ENCODE measurements at regions of chr15 and their contacts with region 1.

Region 1: DNA sequence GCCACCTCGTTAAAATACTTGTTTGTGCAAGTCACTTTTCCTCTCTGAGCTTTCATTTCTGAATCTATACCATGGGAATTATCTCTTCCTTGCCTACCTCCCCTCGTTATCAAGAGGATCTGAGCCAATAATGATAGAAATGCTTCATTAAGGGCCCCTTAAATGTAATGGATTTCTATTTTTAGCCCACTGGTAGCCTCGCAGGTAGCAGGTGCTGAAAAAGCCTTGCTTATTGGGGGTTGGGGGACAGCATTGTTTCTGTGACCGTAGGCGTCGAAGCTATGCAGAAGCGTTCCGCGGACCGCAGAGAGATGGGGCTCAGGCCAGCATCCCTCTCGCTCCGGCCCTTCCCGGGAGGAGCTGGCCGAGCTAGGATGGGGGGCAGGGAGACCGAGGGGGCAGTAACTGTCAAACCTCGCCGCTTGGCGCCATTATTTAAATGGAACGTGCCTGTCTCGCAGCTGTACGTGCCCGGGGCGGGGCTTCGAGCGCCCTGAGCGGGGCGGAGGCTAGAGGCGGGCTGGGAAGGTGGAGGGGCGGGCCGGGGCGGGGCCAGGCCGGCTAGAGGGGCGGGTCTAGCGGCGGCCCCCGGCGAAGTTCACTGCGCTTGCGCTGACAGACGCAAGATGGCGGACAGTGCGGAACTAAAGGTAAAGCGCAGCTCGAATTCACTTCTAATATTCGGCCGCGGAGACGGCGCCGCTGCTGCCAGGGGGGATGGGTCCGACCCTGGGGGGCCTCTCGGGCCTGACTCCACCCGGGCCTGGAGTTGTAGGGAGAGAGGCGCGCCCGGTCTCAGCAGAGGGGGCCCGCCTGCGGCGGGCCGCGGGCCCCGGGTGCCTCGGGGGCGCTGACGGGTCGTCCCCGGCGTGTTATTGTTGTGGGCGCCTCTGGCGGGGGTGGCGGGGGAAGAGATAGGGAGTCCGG is at the start of gene PIAS1:
- DNase-seq: peak; percentile 88
- H3K4me3 ChIP-seq: peak within 1 kb of the TSS; percentile 79 to 99 (median 87)
- H3K27ac ChIP-seq: peak within 1 kb of the TSS; percentile 73
- H3K4me1 ChIP-seq: peaks cover 6% of the 10 kb centered on the region
- H3K27me3 ChIP-seq: no peaks in the 10 kb centered on the region
- CTCF ChIP-seq: no peak
- total RNA-seq, gene PIAS1: 30.2 to 31.0 TPM

Region 2: DNA sequence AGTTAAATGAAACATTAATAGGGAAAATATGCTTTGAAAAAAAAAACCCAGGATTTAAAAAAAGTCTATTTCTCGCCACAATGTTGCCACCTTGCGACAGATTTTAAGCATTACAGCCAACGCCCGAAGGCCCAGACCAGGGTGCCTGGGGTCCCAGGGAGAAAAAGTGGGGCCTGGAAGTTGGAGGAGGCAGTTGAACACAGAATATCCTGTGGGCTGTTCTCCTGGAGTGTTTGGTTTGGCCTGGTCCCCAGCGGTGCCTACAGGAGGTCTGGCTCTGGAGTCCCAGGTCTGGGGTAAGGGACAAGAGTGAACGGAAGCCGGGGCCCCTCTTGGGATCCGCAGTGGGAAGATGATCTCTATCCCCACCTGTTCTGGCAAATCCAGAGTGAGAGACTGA is 217.5 kb before region 1 on chr15:
- CTCF ChIA-PET with region 1: no interaction called
- dilution Hi-C with region 1: no loop called
- in situ Hi-C with region 1: no loop called
- intact Hi-C with region 1: no loop called
- DNase-seq: no peak
- H3K4me3 ChIP-seq: peak overlapping the region in 2 of 3 experiments; percentile 30 to 45
- H3K27ac ChIP-seq: no peak overlapping the region
- H3K4me1 ChIP-seq: peaks cover 43% of the 10 kb centered on the region
- H3K27me3 ChIP-seq: peaks cover 37% of the 10 kb centered on the region
- CTCF ChIP-seq: peak; percentile 61 to 68

Region 3: DNA sequence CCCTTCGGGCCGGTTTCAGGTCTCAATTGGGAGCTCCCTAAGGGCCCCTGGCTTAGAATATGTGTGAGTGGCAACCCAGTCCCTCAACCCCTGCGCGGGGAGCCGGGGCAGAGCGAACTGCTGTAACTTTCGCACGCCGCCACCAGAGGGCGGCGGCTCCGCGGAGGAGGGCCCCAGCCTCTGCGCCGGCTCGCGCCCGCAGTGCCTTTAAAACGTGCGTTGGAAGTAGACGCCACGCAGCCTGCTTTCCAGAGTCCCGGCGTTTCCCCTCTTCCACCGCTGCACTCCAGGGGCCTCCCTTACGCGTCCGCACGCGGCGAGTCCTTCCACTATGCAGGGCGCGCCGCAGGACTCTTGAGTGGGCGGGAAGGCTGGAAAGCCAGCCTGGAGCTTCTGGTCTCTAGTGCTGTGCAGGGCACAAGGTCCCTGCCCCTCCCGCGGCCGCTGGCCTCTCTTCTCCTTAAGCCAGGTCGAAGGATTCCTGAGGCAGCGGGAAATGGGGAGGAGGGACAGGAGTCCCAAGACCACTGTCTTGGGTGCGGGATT is 190.4 kb before region 1 on chr15:
- CTCF ChIA-PET with region 1: interaction called, 4 read pairs
- dilution Hi-C with region 1: no loop called
- in situ Hi-C with region 1: loop called in 1 of 2 experiments (anchors 25 kb)
- intact Hi-C with region 1: loop called (anchors 1 kb)
- DNase-seq: peak; percentile 56
- H3K4me3 ChIP-seq: peak overlapping the region; percentile 35 to 49 (median 47)
- H3K27ac ChIP-seq: no peak overlapping the region
- H3K4me1 ChIP-seq: peaks cover 9% of the 10 kb centered on the region
- H3K27me3 ChIP-seq: no peaks in the 10 kb centered on the region
- CTCF ChIP-seq: peak; percentile 68 to 96

Region 4: GRCh38 chr15:67976506-67977073 is 77.4 kb before region 1 on chr15:
- CTCF ChIA-PET with region 1: no interaction called
- dilution Hi-C with region 1: no loop called
- in situ Hi-C with region 1: no loop called
- intact Hi-C with region 1: no loop called
- DNase-seq: no peak
- H3K4me3 ChIP-seq: no peak overlapping the region
- H3K27ac ChIP-seq: no peak overlapping the region
- H3K4me1 ChIP-seq: no peaks in the 10 kb centered on the region
- H3K27me3 ChIP-seq: no peaks in the 10 kb centered on the region
- CTCF ChIP-seq: no peak

Region 5: GRCh38 chr15:67998599-67999122 is 55.3 kb before region 1 on chr15:
- CTCF ChIA-PET with region 1: no interaction called
- dilution Hi-C with region 1: no loop called
- in situ Hi-C with region 1: no loop called
- intact Hi-C with region 1: loop called (anchors 2 kb)
- DNase-seq: peak; percentile 71
- H3K4me3 ChIP-seq: peak overlapping the region in 1 of 3 experiments; percentile 2
- H3K27ac ChIP-seq: peak overlapping the region; percentile 31
- H3K4me1 ChIP-seq: peaks cover 17% of the 10 kb centered on the region
- H3K27me3 ChIP-seq: no peaks in the 10 kb centered on the region
- CTCF ChIP-seq: no peak

Region 6: DNA sequence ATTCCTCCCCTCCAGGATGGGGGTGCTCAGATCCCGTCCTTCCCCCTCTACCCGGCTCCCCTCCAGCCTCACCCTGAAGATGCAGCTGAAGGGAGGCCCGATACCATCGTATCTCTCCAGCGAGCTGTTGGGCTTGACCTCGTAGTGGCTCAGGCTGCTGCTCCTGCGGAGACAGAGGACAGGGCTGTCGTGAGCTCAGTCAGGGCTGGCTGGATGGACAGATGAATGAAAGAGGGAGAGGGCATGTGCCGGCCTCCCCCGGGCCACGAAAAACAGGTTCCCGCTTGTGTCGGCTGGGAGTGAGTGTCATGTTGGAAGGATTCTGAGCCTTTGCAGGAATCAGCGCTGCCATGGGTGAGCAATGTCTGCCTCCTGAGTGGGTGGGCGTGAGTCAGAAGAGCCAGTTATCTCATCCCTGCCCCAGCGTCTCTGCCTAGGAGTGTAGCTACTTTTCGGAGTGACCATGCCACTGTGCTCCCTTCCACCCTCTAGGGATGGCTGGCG is 258.8 kb after region 1 on chr15:
- CTCF ChIA-PET with region 1: no interaction called
- dilution Hi-C with region 1: no loop called
- in situ Hi-C with region 1: no loop called
- intact Hi-C with region 1: no loop called
- DNase-seq: peak; percentile 77
- H3K4me3 ChIP-seq: no peak overlapping the region
- H3K27ac ChIP-seq: no peak overlapping the region
- H3K4me1 ChIP-seq: peaks cover 11% of the 10 kb centered on the region
- H3K27me3 ChIP-seq: no peaks in the 10 kb centered on the region
- CTCF ChIP-seq: no peak

Region 7: DNA sequence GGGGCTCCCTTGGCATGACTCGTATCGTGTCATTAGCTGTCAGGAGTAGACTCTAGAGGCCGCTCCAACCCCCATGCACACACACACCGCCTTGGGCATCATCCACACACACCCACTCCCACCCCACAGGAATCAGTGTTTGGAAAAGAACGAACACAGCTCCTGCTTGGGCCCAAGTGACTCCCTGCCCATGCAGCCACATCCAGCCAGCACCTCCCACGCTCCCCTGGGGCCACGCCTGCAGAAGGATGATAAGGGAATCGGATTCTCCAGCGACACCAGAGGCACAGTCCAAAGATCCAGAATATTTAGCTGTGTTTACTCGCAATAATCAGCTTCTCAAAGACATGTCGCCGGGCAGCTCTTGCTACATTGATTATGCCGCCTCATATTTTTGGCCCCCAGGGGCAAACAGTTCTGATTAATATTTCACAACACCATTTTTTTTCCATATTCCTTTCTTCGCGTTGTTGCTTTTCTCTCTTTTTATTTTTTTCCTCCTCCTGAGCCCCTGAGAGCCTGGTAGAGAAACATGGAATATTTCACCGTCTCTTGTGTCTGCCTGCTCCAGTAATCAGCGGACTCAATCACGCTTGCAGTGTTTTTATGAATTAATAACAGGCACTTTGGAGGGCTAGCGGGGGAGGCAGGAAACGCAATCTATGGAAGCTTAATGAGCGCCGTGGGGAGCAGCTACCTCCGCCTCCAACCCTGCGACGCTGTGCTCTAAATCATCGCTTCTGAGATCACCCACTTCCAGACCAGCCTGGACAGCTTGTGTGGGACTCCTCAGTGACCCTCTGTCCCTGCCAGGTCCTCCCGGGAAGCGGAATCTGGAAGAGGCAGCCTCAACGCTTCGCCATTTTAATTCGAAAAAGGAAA is 1822.3 kb after region 1 on chr15:
- CTCF ChIA-PET with region 1: no interaction called
- dilution Hi-C with region 1: no loop called
- in situ Hi-C with region 1: no loop called
- intact Hi-C with region 1: no loop called
- DNase-seq: no peak
- H3K4me3 ChIP-seq: no peak overlapping the region
- H3K27ac ChIP-seq: no peak overlapping the region
- H3K4me1 ChIP-seq: no peaks in the 10 kb centered on the region
- H3K27me3 ChIP-seq: peaks cover 5% of the 10 kb centered on the region
- CTCF ChIP-seq: no peak